Esophagus squamous epithelium (tissue), 5 donors: ENCODE measurements at regions of chr20 and their contacts with region 1.

Region 1: GRCh38 chr20:22248051-22248667 is 336.2 kb downstream of the FOXA2 start:
- DNase-seq: no peak
- H3K4me3 ChIP-seq: no peak overlapping the region
- H3K27ac ChIP-seq: no peak overlapping the region
- H3K4me1 ChIP-seq: no peaks in the 10 kb centered on the region
- H3K27me3 ChIP-seq: peaks cover 0 to 11% (median 0%) of the 10 kb centered on the region in 4 donors
- CTCF ChIP-seq: peak in 4 of 6 experiments; percentile 30 to 59 (median 46)
- POLR2A ChIP-seq: no peak

Region 2: DNA sequence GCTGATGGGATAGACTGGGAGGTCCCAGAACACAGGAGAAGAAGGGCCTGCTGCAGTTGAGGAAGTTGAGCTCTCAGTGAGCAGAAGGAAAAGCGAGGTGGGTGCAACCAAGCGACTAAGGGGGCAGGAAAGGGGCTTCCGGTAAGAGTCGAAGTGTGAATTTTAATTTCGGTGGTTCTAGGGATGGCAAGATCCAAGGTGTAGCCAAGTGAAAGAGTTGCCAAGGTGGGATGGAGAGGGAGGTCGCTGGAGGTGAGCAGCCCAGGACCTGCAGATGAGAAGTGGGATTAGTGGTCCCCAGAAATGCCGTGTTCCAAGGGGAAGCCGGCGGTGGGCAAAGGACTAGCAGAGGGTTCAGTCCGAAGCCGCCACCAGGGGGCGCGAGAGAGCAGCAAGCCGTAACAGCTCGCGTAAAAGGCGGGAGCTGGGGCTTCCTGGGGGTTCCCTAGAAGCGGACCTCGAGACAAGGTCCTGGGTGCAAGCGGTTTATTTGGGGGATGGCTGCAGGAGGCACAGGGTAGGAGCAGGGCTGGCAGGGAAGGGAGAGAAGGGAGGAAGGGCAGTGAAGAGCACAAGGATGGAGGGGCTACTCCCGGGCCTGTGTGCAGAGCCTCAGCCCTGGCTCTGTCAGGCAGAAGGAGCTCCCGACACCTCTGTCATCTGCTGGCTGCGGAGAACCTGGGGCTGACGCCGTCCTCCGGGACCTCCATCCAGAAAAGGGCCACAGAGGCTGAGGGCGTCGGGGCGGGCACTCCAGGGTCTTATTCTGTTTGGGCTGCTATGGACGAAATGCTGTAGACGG is 439.1 kb before region 1 on chr20:
- intact Hi-C with region 1: loop called (anchors 10 kb)
- DNase-seq: no peak
- H3K4me3 ChIP-seq: no peak overlapping the region
- H3K27ac ChIP-seq: no peak overlapping the region
- H3K4me1 ChIP-seq: no peaks in the 10 kb centered on the region
- H3K27me3 ChIP-seq: no peaks in the 10 kb centered on the region
- CTCF ChIP-seq: peak in 5 of 6 experiments; percentile 41 to 54 (median 49)
- POLR2A ChIP-seq: no peak

Region 3: DNA sequence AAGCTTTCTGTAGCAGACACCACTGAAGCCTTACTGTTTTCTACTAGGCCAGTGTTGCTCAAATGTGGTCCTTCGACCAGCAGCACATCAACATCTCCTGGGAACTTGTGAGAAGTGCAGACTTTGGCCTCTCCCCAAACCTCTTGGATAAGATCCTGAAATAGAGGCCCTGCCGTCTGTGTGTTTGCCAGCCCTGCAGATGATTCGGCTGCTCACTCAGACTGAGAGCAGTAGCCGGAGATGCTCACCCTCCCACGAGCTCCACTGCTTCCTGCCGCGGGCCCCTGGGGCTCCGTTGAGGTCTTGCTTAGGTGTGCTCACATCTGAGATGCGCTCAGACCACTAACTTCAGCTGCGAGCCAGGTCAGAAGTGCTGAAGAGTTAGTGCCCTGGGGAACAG is 657.5 kb after region 1 on chr20:
- intact Hi-C with region 1: no loop called
- DNase-seq: no peak
- H3K4me3 ChIP-seq: no peak overlapping the region
- H3K27ac ChIP-seq: no peak overlapping the region
- H3K4me1 ChIP-seq: no peaks in the 10 kb centered on the region
- H3K27me3 ChIP-seq: peaks cover 0 to 8% (median 0%) of the 10 kb centered on the region in 4 donors
- CTCF ChIP-seq: no peak
- POLR2A ChIP-seq: no peak